ENCODE measurements at regions of chr9 and their contacts with region 1.

Region 1: DNA sequence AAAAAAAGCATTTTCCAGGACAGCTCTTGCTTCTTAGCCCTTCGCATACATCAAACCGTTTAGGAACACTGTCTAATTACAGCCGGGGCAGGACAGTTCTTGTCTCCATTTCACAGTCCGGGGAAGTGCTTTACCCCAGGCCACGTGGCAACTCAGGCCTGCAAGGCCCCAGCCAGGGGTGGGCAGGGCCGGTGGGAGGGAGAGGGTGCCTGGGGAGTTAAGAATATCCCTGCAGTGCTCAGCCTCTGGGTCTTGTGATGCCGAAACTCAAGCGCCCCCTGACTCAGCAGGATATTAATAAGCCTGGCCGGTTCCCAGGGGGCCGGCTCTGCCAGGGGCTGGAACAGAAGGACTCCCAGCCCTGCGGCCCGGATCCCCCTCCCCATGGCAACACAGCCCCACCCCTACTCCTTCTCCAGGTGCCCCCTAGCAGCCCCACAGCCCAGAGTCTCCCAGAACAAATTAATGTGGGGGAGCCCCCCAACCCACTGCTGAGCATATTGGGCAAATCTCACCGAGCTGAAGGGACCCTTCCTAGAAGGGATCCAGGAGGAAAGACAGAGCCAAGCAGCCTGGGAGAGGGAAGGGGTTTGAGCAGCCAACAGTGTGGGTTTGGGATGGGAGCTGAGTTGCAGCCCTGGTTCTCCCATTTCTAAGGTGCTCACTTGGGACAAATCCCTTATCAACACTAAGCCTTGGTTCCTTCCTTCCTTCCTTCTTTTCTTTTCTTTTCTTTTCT is 45.3 kb downstream of the PLPP7 start:
- DNase-seq: no peak
- H3K4me3 ChIP-seq: no peak overlapping the region
- H3K27ac ChIP-seq: no peak overlapping the region
- H3K4me1 ChIP-seq: peaks cover under 1% of the 10 kb centered on the region; the same call in 1 of the 2 replicates
- H3K27me3 ChIP-seq: no peaks in the 10 kb centered on the region
- CTCF ChIP-seq: no peak

Region 2: GRCh38 chr9:130912932-130913598 is 421.7 kb before region 1 on chr9:
- CTCF ChIA-PET with region 1: interaction called, 10 read pairs
- POLR2A ChIA-PET with region 1: no interaction called
- intact Hi-C with region 1: no loop called
- DNase-seq: peak; percentile 54 to 66
- H3K4me3 ChIP-seq: peak overlapping the region; percentile 34
- H3K27ac ChIP-seq: no peak overlapping the region
- H3K4me1 ChIP-seq: 0 out of 2 replicates have a peak, but pooled peaks cover 4% of the 10 kb centered on the region
- H3K27me3 ChIP-seq: 0 out of 2 replicates have a peak, but pooled peaks cover 8% of the 10 kb centered on the region
- CTCF ChIP-seq: no peak

Region 3: GRCh38 chr9:131178382-131178781 is 156.4 kb before region 1 on chr9:
- CTCF ChIA-PET with region 1: interaction called, 8 read pairs
- POLR2A ChIA-PET with region 1: no interaction called
- intact Hi-C with region 1: loop called (anchors 1 kb)
- DNase-seq: peak; percentile 37 to 63
- H3K4me3 ChIP-seq: no peak overlapping the region
- H3K27ac ChIP-seq: no peak overlapping the region
- H3K4me1 ChIP-seq: no peaks in the 10 kb centered on the region
- H3K27me3 ChIP-seq: no peaks in the 10 kb centered on the region
- CTCF ChIP-seq: peak; percentile 88

Region 4: DNA sequence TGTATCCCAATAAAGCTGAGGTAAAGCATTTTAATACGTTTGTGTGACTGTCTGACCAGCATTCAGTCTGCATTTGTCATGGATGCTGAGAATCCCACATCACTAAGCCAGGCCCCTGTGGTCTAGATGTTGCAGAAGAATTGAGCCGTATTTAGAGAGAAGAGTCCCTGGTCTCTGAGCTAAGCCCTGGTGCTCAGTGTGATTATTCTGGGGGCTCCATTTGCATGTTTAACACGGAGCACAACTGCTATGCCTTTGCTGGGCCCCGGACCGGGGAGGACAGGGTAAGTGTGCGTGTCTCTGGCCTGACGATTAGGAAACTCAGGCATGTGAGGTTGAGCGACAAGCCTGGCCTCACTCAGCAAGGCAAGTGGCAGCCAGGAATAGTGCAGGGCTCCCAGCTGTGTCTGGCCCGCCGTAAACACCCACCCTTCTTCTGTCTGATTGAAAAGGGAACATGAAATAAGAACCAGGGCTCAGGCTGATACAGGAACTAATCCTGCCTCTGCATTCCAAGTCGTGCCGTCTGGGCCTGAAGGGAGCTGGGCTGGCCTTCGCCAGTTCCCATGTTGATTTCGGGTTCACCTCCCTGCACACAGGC is 80.8 kb before region 1 on chr9:
- CTCF ChIA-PET with region 1: interaction called, 10 read pairs
- POLR2A ChIA-PET with region 1: no interaction called
- intact Hi-C with region 1: no loop called
- DNase-seq: no peak
- H3K4me3 ChIP-seq: no peak overlapping the region
- H3K27ac ChIP-seq: no peak overlapping the region
- H3K4me1 ChIP-seq: peaks cover 9% of the 10 kb centered on the region
- H3K27me3 ChIP-seq: no peaks in the 10 kb centered on the region
- CTCF ChIP-seq: no peak

Region 5: GRCh38 chr9:131289301-131290038 is 45.3 kb before region 1 on chr9 and contains the start of gene PLPP7:
- CTCF ChIA-PET with region 1: no interaction called
- POLR2A ChIA-PET with region 1: no interaction called
- intact Hi-C with region 1: no loop called
- DNase-seq: no peak
- H3K4me3 ChIP-seq: no peak within 1 kb of the TSS
- H3K27ac ChIP-seq: no peak within 1 kb of the TSS
- H3K4me1 ChIP-seq: no peaks in the 10 kb centered on the region
- H3K27me3 ChIP-seq: no peaks in the 10 kb centered on the region
- CTCF ChIP-seq: no peak
- total RNA-seq, gene PLPP7: not detected in 2 replicates

Region 6: GRCh38 chr9:131302244-131303075 is 32.3 kb before region 1 on chr9:
- CTCF ChIA-PET with region 1: interaction called, 13 read pairs
- POLR2A ChIA-PET with region 1: no interaction called
- intact Hi-C with region 1: no loop called
- DNase-seq: no peak
- H3K4me3 ChIP-seq: no peak overlapping the region
- H3K27ac ChIP-seq: no peak overlapping the region
- H3K4me1 ChIP-seq: peaks cover 15% of the 10 kb centered on the region
- H3K27me3 ChIP-seq: no peaks in the 10 kb centered on the region
- CTCF ChIP-seq: no peak

Region 7: GRCh38 chr9:131366761-131367401 is 32.1 kb after region 1 on chr9:
- CTCF ChIA-PET with region 1: no interaction called
- POLR2A ChIA-PET with region 1: no interaction called
- intact Hi-C with region 1: no loop called
- DNase-seq: peak; percentile 64 to 72
- H3K4me3 ChIP-seq: no peak overlapping the region
- H3K27ac ChIP-seq: no peak overlapping the region
- H3K4me1 ChIP-seq: peaks cover 19% of the 10 kb centered on the region
- H3K27me3 ChIP-seq: no peaks in the 10 kb centered on the region
- CTCF ChIP-seq: no peak; the same call in 1 of the 2 replicates

Measured in PC-9 (cell line).